ENCODE measurements at regions of chr19 and their contacts with region 1.

Region 1: GRCh38 chr19:8580710-8581281 is 3.6 kb upstream of the MYO1F start:
- DNase-seq: peak; percentile 77 to 89 (median 84)
- ATAC-seq: peak; percentile 35 to 62 (median 60)
- H3K4me3 ChIP-seq: no peak overlapping the region
- H3K27ac ChIP-seq: no peak overlapping the region
- H3K4me1 ChIP-seq: peaks cover 0 to 35% (median 7%) of the 10 kb centered on the region in 12 donors
- H3K27me3 ChIP-seq: peaks cover 0 to 28% (median 0%) of the 10 kb centered on the region in 9 donors
- CTCF ChIP-seq: peak; percentile 98 to 100 (median 99)
- POLR2A ChIP-seq: no peak

Region 2: DNA sequence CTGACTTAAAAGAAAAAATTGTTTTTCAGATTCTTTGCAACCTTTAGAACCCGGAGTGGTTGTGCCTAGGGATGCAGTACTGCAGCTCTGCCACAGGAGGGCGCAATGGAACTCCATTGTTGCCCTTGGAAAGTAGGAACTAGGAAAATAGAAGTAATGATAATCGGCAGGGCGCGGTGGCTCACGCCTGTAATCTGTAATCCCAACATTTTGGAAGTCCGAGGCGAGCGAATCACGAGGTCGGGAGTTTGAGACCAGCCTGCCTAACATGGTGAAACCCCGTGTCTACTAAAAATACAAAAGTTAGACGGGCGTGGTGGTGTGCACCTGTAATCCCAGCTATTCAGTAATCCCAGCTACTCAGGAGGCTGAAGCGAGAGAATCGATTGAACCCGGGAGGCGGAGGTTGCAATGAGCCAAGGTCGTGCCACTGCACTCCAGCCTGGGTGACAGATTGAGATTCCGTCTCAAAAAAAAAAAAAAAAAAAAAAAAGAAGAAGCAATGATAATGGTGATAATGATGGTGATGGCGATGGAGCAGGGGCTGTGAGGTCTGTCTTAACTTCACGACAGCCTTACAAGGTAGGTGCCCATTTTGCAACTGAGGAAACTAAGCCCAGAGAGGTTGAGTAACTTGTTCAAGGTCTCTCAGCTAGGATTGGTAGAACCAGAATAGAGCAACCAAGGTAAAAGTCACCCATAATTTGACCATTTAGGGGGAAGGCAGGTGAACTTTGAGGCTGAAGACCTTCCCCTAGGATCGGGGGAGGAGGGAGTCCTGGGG is 35.2 kb after region 1 on chr19:
- intact Hi-C with region 1: loop called in 3 of 10 experiments (anchors 5 kb)
- DNase-seq: peak in 4 of 5 donors; percentile 49 to 82 (median 60)
- ATAC-seq: peak in 2 of 4 donors; percentile 40 to 53
- H3K4me3 ChIP-seq: no peak overlapping the region
- H3K27ac ChIP-seq: no peak overlapping the region
- H3K4me1 ChIP-seq: peaks cover 0 to 13% (median 5%) of the 10 kb centered on the region in 12 donors
- H3K27me3 ChIP-seq: peaks cover 0 to 5% (median 0%) of the 10 kb centered on the region in 9 donors
- CTCF ChIP-seq: peak; percentile 74 to 96 (median 82)
- POLR2A ChIP-seq: no peak

Region 3: DNA sequence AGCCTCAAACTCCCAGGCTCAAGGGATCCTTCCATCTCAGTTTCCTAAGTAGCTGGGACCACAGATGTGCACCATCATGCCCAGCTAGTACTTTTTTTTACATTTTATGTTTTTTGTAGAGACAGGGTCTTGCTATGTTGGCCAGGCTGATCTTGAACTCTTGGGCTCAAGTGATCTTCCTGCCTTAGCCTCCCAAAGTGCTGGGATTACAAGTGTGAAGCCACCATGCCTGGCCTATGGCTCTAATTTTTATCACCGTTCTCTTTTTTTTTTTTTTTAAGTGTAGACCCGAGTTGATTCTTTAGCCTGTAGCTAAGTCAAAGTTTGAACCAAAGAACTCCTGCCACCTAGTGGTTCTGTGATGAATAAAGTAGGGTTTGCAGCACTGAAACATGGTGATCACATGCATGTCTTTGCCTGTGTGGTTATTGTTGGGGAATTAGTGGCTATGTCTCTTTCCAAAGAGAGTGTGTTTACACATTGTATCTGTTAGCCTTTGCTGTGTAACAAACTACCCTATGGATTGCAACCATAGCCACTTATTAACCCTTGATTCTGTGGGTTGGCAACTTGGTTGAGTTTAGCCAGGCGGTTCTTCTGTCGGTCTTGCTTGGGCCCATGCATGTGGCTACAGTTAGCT is 61.2 kb after region 1 on chr19:
- intact Hi-C with region 1: loop called in 4 of 10 experiments (anchors 2 to 10 kb)
- DNase-seq: no peak
- ATAC-seq: no peak
- H3K4me3 ChIP-seq: no peak overlapping the region
- H3K27ac ChIP-seq: no peak overlapping the region
- H3K4me1 ChIP-seq: peaks cover 0 to 50% (median 0%) of the 10 kb centered on the region in 12 donors
- H3K27me3 ChIP-seq: peaks cover 0 to 19% (median 0%) of the 10 kb centered on the region in 9 donors
- CTCF ChIP-seq: peak; percentile 25 to 59 (median 45)
- POLR2A ChIP-seq: no peak